Heart right ventricle (tissue), 16 donors: ENCODE measurements at regions of chr10 and their contacts with region 1.

Region 1: GRCh38 chr10:16271571-16271970 is 165.2 kb upstream of the PTER start:
- DNase-seq: no peak
- ATAC-seq: no peak
- H3K4me3 ChIP-seq: no peak overlapping the region
- H3K27ac ChIP-seq: no peak overlapping the region
- H3K4me1 ChIP-seq: no peaks in the 10 kb centered on the region
- H3K27me3 ChIP-seq: peaks cover 0 to 3% (median 0%) of the 10 kb centered on the region in 7 donors
- CTCF ChIP-seq: no peak

Region 2: DNA sequence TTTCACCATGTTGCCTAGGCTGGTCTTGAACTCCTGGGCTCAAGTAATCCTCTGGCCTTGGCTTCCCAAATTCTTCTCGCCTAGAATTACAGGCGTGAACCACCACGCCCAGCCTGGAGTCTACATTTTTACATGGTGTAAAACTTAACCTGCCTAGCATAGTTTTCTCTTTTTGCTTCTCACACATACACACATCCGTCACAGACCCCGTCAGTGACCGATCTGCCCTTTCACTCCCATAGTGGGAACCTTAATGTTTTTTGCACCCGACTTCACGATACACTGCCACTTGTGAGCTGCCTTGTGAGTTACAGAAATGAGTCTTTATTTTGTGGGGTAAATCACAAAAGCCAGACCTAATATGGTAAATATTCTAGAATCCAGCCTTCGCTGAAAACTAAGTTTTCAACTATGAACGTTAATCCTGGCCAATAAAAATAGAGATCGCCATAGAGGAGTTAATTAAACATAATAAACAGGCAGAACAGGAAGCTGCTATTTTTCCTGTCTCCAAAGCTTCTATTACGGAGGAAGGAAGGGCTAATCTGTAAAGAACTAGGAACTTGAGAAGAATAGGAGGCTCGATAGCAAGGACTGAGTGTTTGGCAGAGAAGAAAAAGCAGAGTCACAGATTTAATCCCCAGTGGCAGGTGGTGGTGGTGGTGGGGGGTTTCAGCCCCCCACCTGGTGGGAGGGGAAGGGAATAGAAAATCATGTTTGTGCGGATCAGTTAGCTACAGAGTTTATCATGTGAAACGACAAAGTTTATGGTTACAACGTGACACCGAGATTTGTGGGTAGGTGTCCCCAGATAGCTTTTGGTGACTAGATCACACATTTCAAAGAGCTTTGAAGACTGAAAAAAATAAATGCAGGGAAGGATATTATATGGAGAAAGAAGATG is 885.8 kb before region 1 on chr10:
- intact Hi-C with region 1: no loop called
- DNase-seq: no peak
- ATAC-seq: peak in 6 of 8 donors; percentile 33 to 87 (median 81)
- H3K4me3 ChIP-seq: peak overlapping the region in 2 of 10 donors; percentile 7 to 22
- H3K27ac ChIP-seq: peak overlapping the region in 6 of 10 donors; percentile 2 to 74 (median 40)
- H3K4me1 ChIP-seq: peaks cover 0 to 24% (median 7%) of the 10 kb centered on the region in 9 donors
- H3K27me3 ChIP-seq: peaks cover 0 to 24% (median 10%) of the 10 kb centered on the region in 7 donors
- CTCF ChIP-seq: no peak

Region 3: GRCh38 chr10:16231734-16232435 is 39.7 kb before region 1 on chr10:
- intact Hi-C with region 1: no loop called
- DNase-seq: no peak
- ATAC-seq: no peak
- H3K4me3 ChIP-seq: no peak overlapping the region
- H3K27ac ChIP-seq: no peak overlapping the region
- H3K4me1 ChIP-seq: no peaks in the 10 kb centered on the region
- H3K27me3 ChIP-seq: peaks cover 0 to 9% (median 0%) of the 10 kb centered on the region in 7 donors
- CTCF ChIP-seq: no peak

Region 4: GRCh38 chr10:16481052-16481728 is 209.6 kb after region 1 on chr10:
- intact Hi-C with region 1: loop called in 1 of 10 experiments (anchors 10 kb)
- DNase-seq: no peak
- ATAC-seq: peak in 1 of 8 donors; percentile 45
- H3K4me3 ChIP-seq: no peak overlapping the region
- H3K27ac ChIP-seq: no peak overlapping the region
- H3K4me1 ChIP-seq: no peaks in the 10 kb centered on the region
- H3K27me3 ChIP-seq: no peaks in the 10 kb centered on the region
- CTCF ChIP-seq: no peak

Region 5: DNA sequence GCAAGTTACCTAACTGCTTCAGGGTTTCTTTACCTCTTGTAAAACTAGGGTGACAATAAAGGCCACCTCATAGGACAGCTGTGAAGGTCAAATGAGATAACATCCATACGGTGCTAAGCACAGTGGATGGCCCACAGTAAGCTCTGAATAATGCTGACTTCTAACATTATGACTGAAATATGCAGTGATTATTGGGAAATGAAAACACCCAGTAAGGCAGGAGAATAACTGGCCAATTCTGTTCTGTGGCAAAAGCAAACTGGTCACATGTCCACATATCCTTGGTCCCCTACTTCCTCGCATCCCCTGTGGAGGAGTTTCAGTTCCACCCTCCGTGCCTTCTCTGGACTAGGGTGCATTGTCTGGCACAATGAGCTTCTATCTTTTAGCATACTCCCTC is 856.7 kb after region 1 on chr10:
- intact Hi-C with region 1: no loop called
- DNase-seq: no peak
- ATAC-seq: peak in 3 of 8 donors; percentile 19 to 64 (median 42)
- H3K4me3 ChIP-seq: no peak overlapping the region
- H3K27ac ChIP-seq: no peak overlapping the region
- H3K4me1 ChIP-seq: no peaks in the 10 kb centered on the region
- H3K27me3 ChIP-seq: no peaks in the 10 kb centered on the region
- CTCF ChIP-seq: no peak